ENCODE measurements at regions of chr1 and their contacts with region 1.

Region 1: DNA sequence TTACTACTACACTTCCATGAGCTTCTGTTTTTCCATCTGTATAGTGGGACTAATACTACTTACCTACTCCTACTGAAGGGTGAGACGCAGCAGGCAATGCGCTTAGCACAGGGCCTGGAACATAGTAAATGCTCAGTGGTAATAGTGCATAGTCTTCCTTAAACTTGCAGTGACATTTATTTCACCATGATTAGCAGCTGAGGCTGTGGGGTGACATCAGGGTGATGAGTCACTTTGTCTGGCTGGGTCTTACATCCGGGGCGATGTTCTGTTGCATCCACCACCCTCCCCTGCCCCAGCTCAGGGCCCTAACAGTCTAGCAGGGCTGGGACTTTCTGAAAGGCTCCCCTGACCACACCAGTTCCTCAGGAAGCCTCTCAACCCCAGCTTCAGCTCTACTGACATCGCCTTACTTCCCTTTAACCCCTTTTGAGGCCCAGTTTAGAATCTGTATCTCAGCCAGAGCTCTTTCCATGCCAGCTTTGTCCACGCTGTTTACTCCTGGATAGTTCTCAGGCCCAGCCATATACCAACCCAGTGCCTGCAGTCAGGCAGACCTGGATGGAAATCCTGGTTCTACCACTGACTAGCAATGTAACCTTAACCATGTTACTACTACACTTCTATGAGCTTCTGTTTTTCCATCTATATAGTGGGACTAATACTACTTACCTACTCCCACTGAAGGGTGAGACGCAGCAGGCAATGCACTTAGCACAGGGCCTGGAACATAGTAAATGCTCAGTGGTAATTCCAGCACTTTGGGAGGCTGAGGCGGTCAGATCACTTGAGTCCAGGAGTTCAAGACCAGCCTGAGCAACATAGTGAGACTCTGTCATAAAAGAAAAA is 66.3 kb downstream of the CD58 start:
- DNase-seq: peak; percentile 96
- H3K4me3 Mint-ChIP-seq: peak overlapping the region; percentile 46
- H3K27ac Mint-ChIP-seq: peak overlapping the region; percentile 96
- H3K4me1 Mint-ChIP-seq: peaks cover 72% of the 10 kb centered on the region
- H3K27me3 Mint-ChIP-seq: no peaks in the 10 kb centered on the region

Region 2: GRCh38 chr1:115642168-115643072 is 862.1 kb before region 1 on chr1:
- intact Hi-C with region 1: loop called (anchors 10 kb)
- DNase-seq: peak; percentile 82
- H3K4me3 Mint-ChIP-seq: peak overlapping the region; percentile 87
- H3K27ac Mint-ChIP-seq: peak overlapping the region; percentile 57
- H3K4me1 Mint-ChIP-seq: peaks cover 19% of the 10 kb centered on the region
- H3K27me3 Mint-ChIP-seq: peaks cover 27% of the 10 kb centered on the region

Region 3: DNA sequence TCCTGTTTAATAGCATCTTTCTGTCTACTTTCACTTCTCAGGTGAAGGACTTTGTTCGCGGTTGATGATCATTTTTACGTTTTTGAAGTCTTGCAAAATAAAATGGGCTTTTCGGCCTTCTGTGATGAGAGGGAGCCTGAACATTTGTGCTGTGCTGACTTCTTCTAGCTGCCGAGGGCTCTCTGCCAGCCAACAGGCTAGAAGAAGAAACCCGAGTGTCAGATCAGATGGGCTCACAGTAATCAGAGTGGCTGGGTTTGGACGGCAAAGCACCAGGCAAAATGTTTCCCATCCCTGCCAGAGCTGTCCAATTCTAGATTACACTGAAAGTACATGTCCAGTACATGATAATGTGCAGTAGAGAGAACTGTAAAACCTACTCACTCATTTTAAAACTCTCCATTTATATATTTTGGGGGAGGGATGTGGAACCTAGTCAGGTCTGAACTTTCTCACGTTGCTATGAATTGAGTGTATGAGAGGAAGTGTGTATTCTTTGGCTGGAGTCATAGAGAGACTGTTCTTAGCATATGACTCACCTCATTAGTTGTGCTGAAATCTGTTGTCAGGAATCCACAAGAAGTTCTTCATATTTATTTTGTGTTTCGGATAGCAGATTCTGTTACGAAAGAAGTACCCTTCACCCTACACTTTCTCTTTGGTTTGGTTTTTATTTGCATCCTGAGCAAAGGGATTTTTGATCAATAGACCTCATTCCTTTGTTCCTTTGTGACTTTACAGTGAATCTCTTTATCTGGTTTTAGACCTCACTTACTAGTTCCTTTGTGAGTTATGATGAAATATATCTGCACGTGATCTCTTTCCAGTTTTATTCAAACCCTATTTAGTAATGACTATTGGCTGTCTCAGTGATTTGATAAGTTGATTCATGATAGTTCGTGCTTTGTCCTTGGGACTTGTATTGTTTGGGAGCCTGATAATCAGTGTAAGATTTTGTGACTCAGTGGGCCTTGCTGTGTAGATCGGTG is 126.7 kb before region 1 on chr1:
- intact Hi-C with region 1: loop called (anchors 1 kb)
- DNase-seq: peak; percentile 81
- H3K4me3 Mint-ChIP-seq: peak overlapping the region; percentile 88
- H3K27ac Mint-ChIP-seq: peak overlapping the region; percentile 83
- H3K4me1 Mint-ChIP-seq: peaks cover 70% of the 10 kb centered on the region
- H3K27me3 Mint-ChIP-seq: no peaks in the 10 kb centered on the region

Region 4: GRCh38 chr1:116485071-116485735 is 19.3 kb before region 1 on chr1:
- intact Hi-C with region 1: no loop called
- DNase-seq: peak; percentile 95
- H3K4me3 Mint-ChIP-seq: no peak overlapping the region
- H3K27ac Mint-ChIP-seq: no peak overlapping the region
- H3K4me1 Mint-ChIP-seq: peaks cover 10% of the 10 kb centered on the region
- H3K27me3 Mint-ChIP-seq: peaks cover 5% of the 10 kb centered on the region

Region 5: GRCh38 chr1:116514708-116515525 is 10.4 kb after region 1 on chr1:
- intact Hi-C with region 1: loop called (anchors 1 kb)
- DNase-seq: peak; percentile 92
- H3K4me3 Mint-ChIP-seq: peak overlapping the region; percentile 76
- H3K27ac Mint-ChIP-seq: peak overlapping the region; percentile 93
- H3K4me1 Mint-ChIP-seq: peaks cover 64% of the 10 kb centered on the region
- H3K27me3 Mint-ChIP-seq: no peaks in the 10 kb centered on the region

Region 6: GRCh38 chr1:116556289-116557006 is 51.9 kb after region 1 on chr1:
- intact Hi-C with region 1: loop called (anchors 1 kb)
- DNase-seq: peak; percentile 88
- H3K4me3 Mint-ChIP-seq: peak overlapping the region; percentile 19
- H3K27ac Mint-ChIP-seq: peak overlapping the region; percentile 86
- H3K4me1 Mint-ChIP-seq: peaks cover 69% of the 10 kb centered on the region
- H3K27me3 Mint-ChIP-seq: no peaks in the 10 kb centered on the region

Measured in activated CD4-positive, alpha-beta T cell treated with anti-CD3 and anti-CD28 coated beads, Interleukin-2, amount 10 ng/mL, durations not matched to agents 24 days and 14 days (primary cell).